WTC11 (cell line): ENCODE measurements at regions of chr16 and their contacts with region 1.

Region 1: DNA sequence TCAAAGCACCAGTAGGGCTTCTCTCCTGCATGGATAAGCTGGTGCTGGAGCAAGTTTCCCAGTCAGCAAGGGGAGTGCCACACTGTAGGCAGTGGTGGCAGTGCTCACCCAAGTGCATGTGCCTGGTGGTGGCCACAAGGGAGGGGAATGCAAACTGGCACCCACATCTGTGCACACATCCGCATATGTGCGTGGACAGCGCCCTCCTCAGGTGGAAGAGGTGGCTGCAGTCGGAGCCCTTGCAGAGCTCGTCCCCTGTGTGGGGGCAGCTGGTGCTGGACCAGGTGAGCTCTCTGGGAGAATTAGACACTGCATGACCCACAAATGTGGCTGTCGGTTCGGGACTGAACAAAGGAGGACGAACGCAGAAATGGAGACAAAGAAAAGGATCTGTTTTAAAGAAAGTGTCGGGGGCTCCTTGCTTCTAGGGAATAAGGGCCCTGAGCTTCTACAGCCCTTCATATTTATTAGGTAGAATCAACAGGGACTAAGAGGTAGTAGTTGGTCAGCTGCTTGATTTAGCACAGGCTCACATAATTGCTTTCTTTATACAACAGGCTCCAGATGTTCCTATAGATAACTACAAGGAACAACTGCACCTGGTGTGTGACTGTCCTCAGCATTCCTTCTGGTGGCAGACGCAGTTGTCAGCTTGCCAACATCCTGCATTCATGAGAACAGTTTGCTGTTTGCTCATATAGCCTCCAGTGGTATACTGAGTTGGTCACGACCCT is 5.3 kb upstream of the ZNF689 start:
- DNase-seq: peak; percentile 98
- ATAC-seq: peak; percentile 90
- H3K4me3 Mint-ChIP-seq: no peak overlapping the region
- H3K27ac Mint-ChIP-seq: no peak overlapping the region
- H3K4me1 Mint-ChIP-seq: peaks cover 1% of the 10 kb centered on the region; the same call in 1 of the 2 replicates
- H3K27me3 Mint-ChIP-seq: peaks cover 17% of the 10 kb centered on the region
- CTCF ChIP-seq: peak; percentile 99

Region 2: GRCh38 chr16:30183233-30184095 is 432.1 kb before region 1 on chr16 and contains the start of gene CORO1A:
- CTCF ChIA-PET with region 1: interaction called, 10 read pairs
- POLR2A ChIA-PET with region 1: no interaction called
- DNase-seq: peak; percentile 86
- ATAC-seq: peak; percentile 78
- H3K4me3 Mint-ChIP-seq: peak within 1 kb of the TSS; percentile 74
- H3K27ac Mint-ChIP-seq: no peak within 1 kb of the TSS
- H3K4me1 Mint-ChIP-seq: peaks cover 7% of the 10 kb centered on the region
- H3K27me3 Mint-ChIP-seq: peaks cover 51% of the 10 kb centered on the region
- CTCF ChIP-seq: no peak
- total RNA-seq, gene CORO1A: 6.2 to 10.0 TPM (median 6.5 TPM) in 3 replicates

Region 3: DNA sequence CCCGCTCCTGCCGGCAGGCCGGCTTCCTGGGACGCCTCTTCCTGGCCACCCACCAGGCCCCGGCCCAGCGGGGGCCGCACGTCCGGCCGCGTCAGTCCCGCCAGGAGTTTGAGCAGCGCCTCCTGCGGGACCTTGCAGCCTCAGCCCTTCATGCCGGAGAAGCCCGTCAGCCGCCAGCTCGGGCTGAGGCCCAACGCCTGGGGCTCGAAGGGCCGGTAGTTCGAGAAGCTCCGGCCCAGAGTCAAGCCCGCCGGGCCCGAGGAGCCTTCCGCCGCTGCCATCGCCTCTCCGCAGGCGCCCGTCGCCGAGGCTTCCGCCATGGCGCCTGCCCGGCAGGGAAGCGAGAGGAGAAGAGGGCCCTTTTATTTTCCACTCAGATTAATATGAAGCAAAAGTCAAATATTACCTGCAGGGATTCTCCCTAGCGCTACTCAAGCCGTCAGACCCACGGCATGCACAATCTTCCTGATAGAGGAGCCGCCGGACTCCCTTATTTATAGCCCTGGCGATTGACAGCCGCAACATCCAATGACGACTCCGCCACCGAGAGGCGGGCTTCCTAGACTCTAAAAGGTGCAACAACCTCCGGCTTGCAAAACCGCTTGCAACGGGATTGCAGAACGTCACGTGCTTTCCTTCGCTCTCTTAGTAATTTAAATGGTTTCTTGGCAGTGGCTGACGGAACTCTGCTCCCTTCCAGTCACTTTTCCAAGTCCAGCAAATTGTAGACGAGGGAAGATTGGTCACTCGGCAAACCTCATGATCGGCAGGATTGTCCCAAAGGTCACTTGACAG is 169.9 kb before region 1 on chr16 and contains the start of gene SEPHS2:
- CTCF ChIA-PET with region 1: interaction called, 41 read pairs
- POLR2A ChIA-PET with region 1: no interaction called
- DNase-seq: peak; percentile 96
- ATAC-seq: peak; percentile 91
- H3K4me3 Mint-ChIP-seq: peak within 1 kb of the TSS; percentile 77
- H3K27ac Mint-ChIP-seq: peak within 1 kb of the TSS; percentile 98
- H3K4me1 Mint-ChIP-seq: peaks cover 22% of the 10 kb centered on the region
- H3K27me3 Mint-ChIP-seq: peaks cover 28% of the 10 kb centered on the region
- CTCF ChIP-seq: no peak
- total RNA-seq, gene SEPHS2: 50.4 to 55.2 TPM (median 53.5 TPM) in 3 replicates

Region 4: DNA sequence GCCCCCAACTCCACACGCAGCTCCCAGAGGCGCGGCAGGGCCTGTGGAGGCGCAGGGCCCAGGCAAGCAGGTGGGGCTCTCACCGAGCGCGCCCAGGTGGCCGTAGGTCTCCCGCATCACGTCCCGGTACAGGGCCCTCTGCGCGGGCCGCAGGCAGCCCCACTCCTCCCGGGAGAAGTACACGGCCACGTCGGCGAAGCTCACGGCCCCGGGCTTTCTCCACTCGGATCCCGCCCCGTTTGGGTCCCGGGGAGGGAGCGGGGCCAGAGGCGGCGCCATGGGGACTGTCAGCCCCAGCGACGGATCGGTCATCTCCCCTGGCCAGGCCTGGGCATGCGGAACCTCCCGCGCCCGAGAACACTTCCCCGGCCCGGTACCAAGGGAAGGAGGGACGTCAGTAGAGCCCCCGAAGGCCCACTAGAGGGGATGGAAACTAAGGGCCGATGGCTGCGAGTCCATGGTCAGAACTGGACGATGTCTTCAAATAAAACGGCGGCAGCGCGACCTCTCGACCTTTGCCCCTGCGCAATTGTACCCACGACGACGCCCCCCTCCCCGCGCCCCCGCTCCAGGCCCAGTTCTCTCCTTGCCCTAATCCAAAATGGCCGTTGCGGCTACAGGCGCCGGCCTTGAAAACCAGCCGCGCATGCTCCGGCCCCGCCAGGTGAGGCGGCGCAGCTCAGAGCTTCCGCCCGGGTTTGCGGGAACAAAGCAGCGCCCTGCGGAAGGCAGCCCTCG is 81.0 kb before region 1 on chr16 and contains the start of gene ZNF747:
- CTCF ChIA-PET with region 1: interaction called, 30 read pairs
- POLR2A ChIA-PET with region 1: interaction called, 5 read pairs
- DNase-seq: peak; percentile 89
- ATAC-seq: peak; percentile 68
- H3K4me3 Mint-ChIP-seq: peak within 1 kb of the TSS; percentile 95
- H3K27ac Mint-ChIP-seq: peak within 1 kb of the TSS; percentile 99
- H3K4me1 Mint-ChIP-seq: peaks cover 27% of the 10 kb centered on the region
- H3K27me3 Mint-ChIP-seq: no peaks in the 10 kb centered on the region
- CTCF ChIP-seq: no peak
- total RNA-seq, gene ZNF747: 11.3 to 11.7 TPM (median 11.5 TPM) in 3 replicates

Region 5: GRCh38 chr16:30585400-30586189 is 29.9 kb before region 1 on chr16 and contains the start of gene ZNF785:
- CTCF ChIA-PET with region 1: interaction called, 19 read pairs
- POLR2A ChIA-PET with region 1: interaction called, 4 read pairs
- DNase-seq: peak; percentile 96
- ATAC-seq: peak; percentile 91
- H3K4me3 Mint-ChIP-seq: peak within 1 kb of the TSS; percentile 89
- H3K27ac Mint-ChIP-seq: peak within 1 kb of the TSS; percentile 97
- H3K4me1 Mint-ChIP-seq: peaks cover 10% of the 10 kb centered on the region; the same call in 1 of the 2 replicates
- H3K27me3 Mint-ChIP-seq: no peaks in the 10 kb centered on the region
- CTCF ChIP-seq: no peak
- total RNA-seq, gene ZNF785: 15.4 to 16.5 TPM (median 16.0 TPM) in 3 replicates

Region 6: GRCh38 chr16:30650369-30651123 is 35.0 kb after region 1 on chr16 and contains the start of gene PRR14:
- CTCF ChIA-PET with region 1: interaction called, 11 read pairs
- POLR2A ChIA-PET with region 1: no interaction called
- DNase-seq: peak; percentile 98
- ATAC-seq: peak; percentile 89
- H3K4me3 Mint-ChIP-seq: peak within 1 kb of the TSS; percentile 97
- H3K27ac Mint-ChIP-seq: peak within 1 kb of the TSS; percentile 98
- H3K4me1 Mint-ChIP-seq: peaks cover 15% of the 10 kb centered on the region
- H3K27me3 Mint-ChIP-seq: peaks cover 43% of the 10 kb centered on the region
- CTCF ChIP-seq: 0 out of 2 replicates have a peak, but pooled peaks have one; percentile 16
- total RNA-seq, gene PRR14: 21.9 to 24.3 TPM (median 22.0 TPM) in 3 replicates